ENCODE measurements at regions of chr7 and their contacts with region 1.

Region 1: DNA sequence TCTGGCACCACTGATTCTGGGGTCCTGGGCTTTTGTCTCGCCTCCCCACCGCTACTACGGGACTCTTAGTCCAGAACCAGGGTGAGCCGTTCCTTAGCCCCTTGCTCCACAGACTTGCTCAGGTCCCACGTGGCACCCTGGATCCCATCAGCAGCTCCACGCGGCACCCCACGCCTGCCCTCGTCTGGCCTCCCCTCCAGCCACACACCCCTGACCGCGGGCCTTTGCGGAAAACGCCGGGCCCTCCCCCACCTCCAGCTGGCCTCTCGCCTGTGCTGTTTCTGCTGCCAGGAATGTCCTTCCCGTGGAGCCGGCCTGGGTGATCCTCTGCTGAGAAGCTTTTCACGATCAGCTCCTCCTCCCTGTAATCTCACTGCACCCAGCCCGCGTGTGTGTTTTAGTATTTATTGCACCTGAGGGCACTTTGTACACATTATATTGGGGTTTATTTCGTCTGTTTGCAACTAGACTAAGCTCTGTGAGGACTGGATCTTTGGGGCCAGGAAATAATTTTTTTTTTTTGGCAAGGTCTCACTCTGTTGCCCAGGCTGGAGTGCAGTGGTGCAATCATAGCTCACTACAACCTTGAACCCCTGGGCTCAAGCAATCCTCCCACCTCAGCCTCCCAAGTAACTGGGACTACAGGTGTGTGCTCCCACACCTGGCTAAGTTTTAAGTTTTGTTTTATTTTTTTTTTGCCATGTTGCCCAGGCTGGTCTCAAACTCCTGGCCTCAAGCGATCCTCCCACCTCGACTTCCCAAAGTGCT is 10.5 kb upstream of the TTYH3 start:
- DNase-seq: no peak
- CTCF ChIP-seq: no peak

Region 2: GRCh38 chr7:2646336-2646679 is 25.1 kb after region 1 on chr7:
- CTCF ChIA-PET with region 1: no interaction called
- POLR2A ChIA-PET with region 1: interaction called, 10 read pairs
- DNase-seq: no peak
- CTCF ChIP-seq: no peak

Measured in GM10248 (cell line).